T-cell (primary cell): ENCODE measurements at regions of chr2 and their contacts with region 1.

Region 1: DNA sequence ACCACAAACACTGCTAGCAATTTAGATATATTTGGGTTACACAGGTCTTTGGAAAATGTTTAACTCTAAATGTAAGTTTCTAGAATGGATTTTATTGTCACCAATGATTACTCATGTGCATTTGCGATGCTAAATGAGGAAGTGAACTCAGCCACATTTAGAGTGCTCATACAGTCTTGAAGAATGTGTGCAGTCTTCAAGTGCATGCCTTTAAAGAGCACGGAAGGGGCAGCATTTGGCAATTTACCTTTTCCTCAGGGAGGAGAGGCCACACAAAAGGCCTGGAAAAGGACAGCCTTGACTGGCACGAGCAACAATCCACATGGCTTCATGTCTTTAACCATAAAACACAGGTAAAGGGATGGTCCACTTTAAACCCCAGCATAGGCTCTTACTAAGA is 78.5 kb upstream of the STK17B start:
- DNase-seq: no peak
- ATAC-seq: peak; percentile 57 to 68 (median 66)
- H3K4me3 ChIP-seq: no peak overlapping the region
- H3K4me3 Mint-ChIP-seq: peak overlapping the region in 1 of 3 donors; percentile 44
- H3K27ac ChIP-seq: no peak overlapping the region
- H3K27ac Mint-ChIP-seq: peak overlapping the region; percentile 68 to 76
- H3K4me1 ChIP-seq: peaks cover 15 to 32% of the 10 kb centered on the region in 2 experiments
- H3K4me1 Mint-ChIP-seq: peaks cover 78 to 84% (median 79%) of the 10 kb centered on the region in 3 donors
- H3K27me3 ChIP-seq: no peaks in the 10 kb centered on the region
- H3K27me3 Mint-ChIP-seq: no peaks in the 10 kb centered on the region

Region 2: GRCh38 chr2:196399722-196400691 is 150.1 kb after region 1 on chr2:
- CTCF ChIA-PET with region 1: no interaction called
- POLR2A ChIA-PET with region 1: interaction called in 1 of 2 experiments, 10 read pairs
- DNase-seq: no peak
- ATAC-seq: no peak
- H3K4me3 ChIP-seq: no peak overlapping the region
- H3K4me3 Mint-ChIP-seq: no peak overlapping the region
- H3K27ac ChIP-seq: no peak overlapping the region
- H3K27ac Mint-ChIP-seq: no peak overlapping the region
- H3K4me1 ChIP-seq: no peaks in the 10 kb centered on the region
- H3K4me1 Mint-ChIP-seq: no peaks in the 10 kb centered on the region
- H3K27me3 ChIP-seq: no peaks in the 10 kb centered on the region
- H3K27me3 Mint-ChIP-seq: no peaks in the 10 kb centered on the region